A673 (cell line): ENCODE measurements at regions of chr6 and their contacts with region 1.

Region 1: GRCh38 chr6:75526502-75527127 is 33.0 kb upstream of the FILIP1 start:
- DNase-seq: peak; percentile 78
- H3K4me3 ChIP-seq: no peak overlapping the region
- H3K27ac ChIP-seq: no peak overlapping the region
- H3K4me1 ChIP-seq: peaks cover 11% of the 10 kb centered on the region
- H3K27me3 ChIP-seq: no peaks in the 10 kb centered on the region
- CTCF ChIP-seq: peak; percentile 79

Region 2: DNA sequence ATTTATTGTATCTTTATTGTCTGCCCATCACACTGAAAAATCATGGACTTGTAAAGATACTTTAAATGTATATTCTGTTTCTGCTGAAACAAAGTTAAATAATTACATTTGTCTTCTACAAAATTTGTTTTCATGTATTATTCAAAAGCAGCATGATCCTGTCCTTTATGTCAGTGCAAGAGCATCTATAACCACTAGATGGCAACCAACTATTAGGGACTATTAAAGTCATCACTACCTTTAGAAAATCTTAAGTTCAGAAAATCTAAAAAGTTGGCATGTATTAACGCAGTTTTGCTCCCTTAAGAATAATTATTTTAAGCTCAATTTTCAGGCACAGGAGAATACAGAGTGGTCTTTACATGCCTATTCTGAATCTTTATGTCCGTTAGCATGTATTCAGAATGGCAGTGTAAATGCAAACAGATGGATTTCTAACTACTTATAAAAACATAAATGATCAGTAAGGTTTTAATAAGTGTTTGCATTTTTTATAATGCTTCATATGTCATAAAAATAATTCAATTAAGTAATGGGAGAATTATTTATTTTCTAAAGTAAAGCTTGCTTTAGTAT is 259.8 kb before region 1 on chr6:
- CTCF ChIA-PET with region 1: no interaction called
- POLR2A ChIA-PET with region 1: no interaction called
- intact Hi-C with region 1: loop called (anchors 2 kb)
- DNase-seq: peak; percentile 73
- H3K4me3 ChIP-seq: no peak overlapping the region
- H3K27ac ChIP-seq: no peak overlapping the region
- H3K4me1 ChIP-seq: no peaks in the 10 kb centered on the region
- H3K27me3 ChIP-seq: no peaks in the 10 kb centered on the region
- CTCF ChIP-seq: peak; percentile 89

Region 3: DNA sequence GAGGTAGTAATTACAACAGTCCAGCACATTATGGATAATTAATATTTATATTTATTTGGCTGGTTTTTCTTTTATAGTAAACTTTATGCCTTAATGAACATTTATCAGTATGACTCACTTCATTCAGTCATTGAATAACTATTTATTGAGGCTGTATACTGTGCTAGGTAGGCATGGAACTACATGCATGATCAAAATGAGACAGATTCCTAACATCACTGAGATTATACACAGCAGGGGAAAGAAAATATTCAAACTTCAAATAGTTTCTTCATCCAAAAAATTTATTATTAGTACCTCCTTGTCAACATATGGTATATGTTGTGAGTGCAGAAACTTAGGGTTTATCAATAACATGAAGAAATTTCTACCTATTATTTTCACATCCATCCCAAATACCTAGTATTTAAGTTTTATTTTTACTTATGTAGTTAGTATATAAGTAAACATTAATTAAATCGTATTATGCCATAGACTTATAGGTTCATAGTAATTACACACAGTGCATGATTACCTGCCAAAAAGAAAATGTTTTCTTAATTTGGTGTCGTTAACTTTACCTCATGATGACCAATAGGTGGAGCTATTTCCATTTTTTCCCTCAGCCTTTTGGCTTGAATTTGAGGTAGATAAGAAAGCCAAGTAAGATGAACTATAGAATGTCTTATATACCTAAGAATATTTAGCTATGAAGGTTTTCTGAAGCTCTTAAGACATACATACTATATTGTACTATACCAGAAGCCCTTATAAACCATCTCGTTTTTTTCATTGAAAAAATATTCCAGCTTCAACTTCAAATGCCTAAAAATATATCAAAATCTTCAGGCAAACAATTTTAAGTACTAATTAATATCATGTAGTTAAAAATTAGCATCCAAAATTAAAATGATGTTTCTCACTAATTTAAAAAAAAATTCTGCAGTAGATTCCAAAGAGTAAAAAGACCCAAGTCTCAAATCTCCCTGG is 229.5 kb before region 1 on chr6:
- CTCF ChIA-PET with region 1: interaction called, 3 read pairs
- POLR2A ChIA-PET with region 1: no interaction called
- intact Hi-C with region 1: loop called (anchors 1 kb)
- DNase-seq: peak; percentile 77
- H3K4me3 ChIP-seq: no peak overlapping the region
- H3K27ac ChIP-seq: no peak overlapping the region
- H3K4me1 ChIP-seq: peaks cover 4% of the 10 kb centered on the region
- H3K27me3 ChIP-seq: no peaks in the 10 kb centered on the region
- CTCF ChIP-seq: peak; percentile 78

Region 4: DNA sequence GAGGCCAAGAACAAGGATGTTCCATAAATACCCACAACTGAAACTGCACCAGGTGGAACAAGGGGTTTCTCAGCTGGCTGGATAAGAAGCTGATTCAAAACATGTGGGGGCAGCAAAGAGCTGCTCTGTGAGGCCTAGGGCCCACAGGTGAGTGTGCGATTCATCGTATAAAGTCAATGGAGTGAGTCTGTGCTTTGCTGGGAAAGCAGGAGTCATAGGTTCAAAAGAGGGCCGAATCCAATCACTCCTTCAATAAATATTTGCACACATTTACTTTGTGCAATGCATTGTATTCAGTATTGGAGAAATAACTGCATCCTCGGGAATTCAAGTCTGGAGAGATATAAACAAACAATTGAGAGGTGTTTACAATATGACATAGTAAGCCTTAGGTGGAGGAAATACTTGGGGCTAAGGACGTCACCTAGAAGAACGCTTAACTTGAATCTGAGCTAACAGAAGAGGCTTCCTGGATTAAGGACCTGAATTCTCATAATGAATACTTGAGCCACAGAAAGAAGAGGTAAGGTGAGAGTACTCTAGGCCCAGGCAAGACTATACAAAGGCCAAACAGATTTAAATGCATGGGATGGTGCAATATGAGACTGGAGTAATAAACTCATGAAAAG is 158.3 kb before region 1 on chr6:
- CTCF ChIA-PET with region 1: no interaction called
- POLR2A ChIA-PET with region 1: no interaction called
- intact Hi-C with region 1: loop called (anchors 5 kb)
- DNase-seq: peak; percentile 21
- H3K4me3 ChIP-seq: no peak overlapping the region
- H3K27ac ChIP-seq: no peak overlapping the region
- H3K4me1 ChIP-seq: peaks cover 2% of the 10 kb centered on the region
- H3K27me3 ChIP-seq: no peaks in the 10 kb centered on the region
- CTCF ChIP-seq: peak; percentile 55

Region 5: DNA sequence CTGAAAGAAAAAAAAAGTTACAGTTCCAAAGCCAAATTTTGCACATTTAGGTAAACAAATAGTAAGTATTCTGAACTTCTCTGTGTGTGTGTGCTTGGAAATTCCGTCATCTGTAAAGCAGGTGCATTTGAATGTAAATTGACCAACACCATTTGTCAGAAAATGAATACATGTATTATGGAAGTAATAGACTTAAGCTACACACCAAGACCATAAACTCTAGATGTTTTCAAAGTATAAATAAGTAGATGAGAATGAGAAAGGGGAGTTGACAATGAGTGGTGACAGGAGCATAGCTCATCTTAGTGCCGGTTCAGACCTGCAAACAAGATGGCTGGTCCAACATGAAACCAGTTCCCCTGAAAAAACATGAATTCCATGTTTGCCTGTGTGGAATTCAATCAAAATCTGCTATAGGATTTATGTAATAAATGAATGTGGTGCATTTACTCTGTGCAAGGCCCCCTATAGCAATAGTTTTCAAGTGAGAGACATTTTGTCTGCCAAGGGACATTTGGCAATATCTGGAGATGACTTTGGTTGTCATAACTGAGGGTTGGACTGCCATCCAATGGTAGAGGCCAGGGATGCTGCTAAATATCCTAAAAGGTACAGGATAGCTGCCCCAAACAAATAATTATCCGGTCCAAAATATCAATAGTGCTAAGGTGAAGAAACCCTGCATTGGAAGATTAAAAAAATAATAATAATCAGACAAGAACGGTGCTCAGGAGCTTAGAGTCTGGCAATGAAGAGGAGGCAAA is 22.0 kb before region 1 on chr6:
- CTCF ChIA-PET with region 1: no interaction called
- POLR2A ChIA-PET with region 1: no interaction called
- intact Hi-C with region 1: no loop called
- DNase-seq: peak; percentile 38
- H3K4me3 ChIP-seq: no peak overlapping the region
- H3K27ac ChIP-seq: no peak overlapping the region
- H3K4me1 ChIP-seq: peaks cover 8% of the 10 kb centered on the region
- H3K27me3 ChIP-seq: no peaks in the 10 kb centered on the region
- CTCF ChIP-seq: peak; percentile 52

Region 6: GRCh38 chr6:76453270-76453669 is 926.7 kb after region 1 on chr6:
- CTCF ChIA-PET with region 1: no interaction called
- POLR2A ChIA-PET with region 1: no interaction called
- intact Hi-C with region 1: no loop called
- DNase-seq: no peak
- H3K4me3 ChIP-seq: no peak overlapping the region
- H3K27ac ChIP-seq: no peak overlapping the region
- H3K4me1 ChIP-seq: no peaks in the 10 kb centered on the region
- H3K27me3 ChIP-seq: no peaks in the 10 kb centered on the region
- CTCF ChIP-seq: no peak

Region 7: GRCh38 chr6:76481101-76481500 is 954.5 kb after region 1 on chr6:
- CTCF ChIA-PET with region 1: no interaction called
- POLR2A ChIA-PET with region 1: no interaction called
- intact Hi-C with region 1: no loop called
- DNase-seq: no peak
- H3K4me3 ChIP-seq: no peak overlapping the region
- H3K27ac ChIP-seq: no peak overlapping the region
- H3K4me1 ChIP-seq: no peaks in the 10 kb centered on the region
- H3K27me3 ChIP-seq: no peaks in the 10 kb centered on the region
- CTCF ChIP-seq: no peak